ENCODE measurements at regions of chr6 and their contacts with region 1.

Region 1: GRCh38 chr6:71383901-71384489 is 95.4 kb downstream of the OGFRL1 start:
- DNase-seq: peak in 1 of 2 experiments; percentile 57
- H3K4me3 ChIP-seq: no peak overlapping the region
- H3K4me3 Mint-ChIP-seq: no peak overlapping the region
- H3K27ac Mint-ChIP-seq: no peak overlapping the region
- H3K4me1 ChIP-seq: peaks cover 13% of the 10 kb centered on the region
- H3K4me1 Mint-ChIP-seq: no peaks in the 10 kb centered on the region
- H3K27me3 ChIP-seq: no peaks in the 10 kb centered on the region
- H3K27me3 Mint-ChIP-seq: no peaks in the 10 kb centered on the region
- CTCF ChIP-seq: peak; percentile 52 to 63

Region 2: GRCh38 chr6:71404145-71404966 is 20.4 kb after region 1 on chr6:
- CTCF ChIA-PET with region 1: interaction called, 3 read pairs
- POLR2A ChIA-PET with region 1: no interaction called
- intact Hi-C with region 1: loop called (anchors 1 kb)
- DNase-seq: peak in 1 of 2 experiments; percentile 61
- H3K4me3 ChIP-seq: no peak overlapping the region
- H3K4me3 Mint-ChIP-seq: peak overlapping the region; percentile 57
- H3K27ac Mint-ChIP-seq: peak overlapping the region; percentile 87
- H3K4me1 ChIP-seq: peaks cover 54% of the 10 kb centered on the region
- H3K4me1 Mint-ChIP-seq: peaks cover 21% of the 10 kb centered on the region
- H3K27me3 ChIP-seq: no peaks in the 10 kb centered on the region
- H3K27me3 Mint-ChIP-seq: no peaks in the 10 kb centered on the region
- CTCF ChIP-seq: no peak

Region 3: DNA sequence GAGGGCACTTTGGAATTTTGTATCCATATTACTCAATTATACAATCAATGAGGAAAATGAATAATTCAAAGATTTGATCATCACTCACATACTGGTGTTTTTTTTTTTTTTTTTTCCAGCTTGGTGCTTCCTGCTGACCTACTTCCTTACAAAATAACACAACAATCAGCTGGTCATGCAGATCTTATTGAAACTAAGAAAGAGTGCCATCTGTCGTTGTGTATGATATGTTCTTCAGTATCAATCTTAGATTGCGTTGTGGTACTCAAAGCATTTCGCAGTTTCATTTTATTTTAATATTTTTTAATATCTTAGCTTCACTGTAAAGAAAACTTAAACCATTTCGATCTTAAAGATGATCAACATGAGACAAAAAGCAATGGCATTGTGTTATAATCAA is 60.2 kb after region 1 on chr6:
- CTCF ChIA-PET with region 1: no interaction called
- POLR2A ChIA-PET with region 1: no interaction called
- intact Hi-C with region 1: loop called (anchors 1 kb)
- DNase-seq: no peak
- H3K4me3 ChIP-seq: no peak overlapping the region
- H3K4me3 Mint-ChIP-seq: no peak overlapping the region
- H3K27ac Mint-ChIP-seq: no peak overlapping the region
- H3K4me1 ChIP-seq: no peaks in the 10 kb centered on the region
- H3K4me1 Mint-ChIP-seq: no peaks in the 10 kb centered on the region
- H3K27me3 ChIP-seq: no peaks in the 10 kb centered on the region
- H3K27me3 Mint-ChIP-seq: no peaks in the 10 kb centered on the region
- CTCF ChIP-seq: no peak

Region 4: DNA sequence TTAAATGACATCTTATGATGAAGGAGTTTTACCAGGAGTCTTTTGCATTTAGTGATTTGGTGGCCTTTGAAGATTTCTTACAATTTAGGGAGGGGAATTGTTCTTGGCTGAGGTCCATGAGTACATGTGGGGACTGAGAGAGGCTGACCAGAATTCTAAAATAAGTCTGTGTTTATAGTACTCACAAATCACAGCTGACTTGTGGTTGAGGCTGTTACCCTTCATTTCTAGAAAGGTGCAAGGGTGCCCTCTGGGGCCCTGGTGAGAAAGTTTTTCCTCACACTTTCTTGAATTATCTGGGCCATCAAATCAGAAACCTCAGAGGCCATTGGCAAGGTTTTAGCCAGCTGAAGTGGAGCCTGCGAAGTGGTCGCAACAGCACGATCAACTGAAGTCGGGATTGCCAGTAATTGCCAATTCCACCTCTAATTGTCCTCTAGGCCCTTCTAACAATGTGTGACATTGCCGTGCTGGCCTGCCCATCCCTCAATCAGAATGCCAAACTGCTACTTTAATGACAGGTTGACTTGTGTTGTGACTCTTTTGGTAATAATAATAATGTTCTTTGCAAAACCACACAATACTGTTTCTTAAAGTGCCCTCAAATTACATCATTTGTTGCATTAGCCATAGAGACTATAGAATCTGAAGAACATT is 126.2 kb after region 1 on chr6:
- CTCF ChIA-PET with region 1: interaction called, 8 read pairs
- POLR2A ChIA-PET with region 1: no interaction called
- intact Hi-C with region 1: loop called (anchors 1 kb)
- DNase-seq: peak; percentile 54 to 69
- H3K4me3 ChIP-seq: no peak overlapping the region
- H3K4me3 Mint-ChIP-seq: no peak overlapping the region
- H3K27ac Mint-ChIP-seq: peak overlapping the region; percentile 50
- H3K4me1 ChIP-seq: 0 out of 2 replicates have a peak, but pooled peaks cover 3% of the 10 kb centered on the region
- H3K4me1 Mint-ChIP-seq: peaks cover 7% of the 10 kb centered on the region
- H3K27me3 ChIP-seq: no peaks in the 10 kb centered on the region
- H3K27me3 Mint-ChIP-seq: no peaks in the 10 kb centered on the region
- CTCF ChIP-seq: peak; percentile 59 to 68

Region 5: DNA sequence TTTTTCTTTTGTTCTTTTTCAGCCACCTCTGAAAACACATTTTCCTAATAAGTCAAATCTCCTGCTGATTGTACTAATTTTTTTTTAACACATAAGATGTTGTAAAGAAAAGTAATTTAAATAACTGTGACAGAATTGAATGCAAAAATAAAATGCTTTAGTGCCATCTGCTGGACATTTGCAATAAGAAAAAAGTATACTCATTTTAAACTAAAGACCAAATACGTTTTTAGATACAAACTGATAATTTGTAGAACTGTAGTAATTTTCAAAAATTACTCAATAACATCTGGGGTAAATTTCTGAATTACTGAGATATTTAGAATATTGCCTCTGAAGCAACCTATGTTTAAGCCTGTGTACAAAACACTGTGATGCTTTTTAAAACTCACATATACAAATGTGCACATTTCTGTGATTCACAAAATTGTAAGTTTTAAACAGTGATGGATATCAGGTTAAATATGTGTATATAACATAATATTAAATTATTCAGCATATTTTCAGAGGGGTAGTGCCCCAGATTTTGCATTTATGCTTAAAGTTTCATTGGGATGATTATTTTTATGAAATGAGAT is 701.1 kb after region 1 on chr6:
- CTCF ChIA-PET with region 1: no interaction called
- POLR2A ChIA-PET with region 1: no interaction called
- intact Hi-C with region 1: loop called (anchors 2 kb)
- DNase-seq: peak in 1 of 2 experiments; percentile 6
- H3K4me3 ChIP-seq: no peak overlapping the region
- H3K4me3 Mint-ChIP-seq: no peak overlapping the region
- H3K27ac Mint-ChIP-seq: no peak overlapping the region
- H3K4me1 ChIP-seq: no peaks in the 10 kb centered on the region
- H3K4me1 Mint-ChIP-seq: no peaks in the 10 kb centered on the region
- H3K27me3 ChIP-seq: no peaks in the 10 kb centered on the region
- H3K27me3 Mint-ChIP-seq: no peaks in the 10 kb centered on the region
- CTCF ChIP-seq: peak; percentile 32 to 53

Measured in Caco-2 (cell line).